ENCODE measurements at regions of chr11 and their contacts with region 1.

Region 1: GRCh38 chr11:71787098-71787823 is 45.7 kb upstream of the DEFB108B start:
- DNase-seq: peak; percentile 97 to 99
- H3K4me3 ChIP-seq: peak overlapping the region; percentile 91
- H3K27ac ChIP-seq: peak overlapping the region; percentile 89
- H3K4me1 ChIP-seq: peaks cover 45% of the 10 kb centered on the region
- H3K27me3 ChIP-seq: no peaks in the 10 kb centered on the region
- CTCF ChIP-seq: no peak

Region 2: DNA sequence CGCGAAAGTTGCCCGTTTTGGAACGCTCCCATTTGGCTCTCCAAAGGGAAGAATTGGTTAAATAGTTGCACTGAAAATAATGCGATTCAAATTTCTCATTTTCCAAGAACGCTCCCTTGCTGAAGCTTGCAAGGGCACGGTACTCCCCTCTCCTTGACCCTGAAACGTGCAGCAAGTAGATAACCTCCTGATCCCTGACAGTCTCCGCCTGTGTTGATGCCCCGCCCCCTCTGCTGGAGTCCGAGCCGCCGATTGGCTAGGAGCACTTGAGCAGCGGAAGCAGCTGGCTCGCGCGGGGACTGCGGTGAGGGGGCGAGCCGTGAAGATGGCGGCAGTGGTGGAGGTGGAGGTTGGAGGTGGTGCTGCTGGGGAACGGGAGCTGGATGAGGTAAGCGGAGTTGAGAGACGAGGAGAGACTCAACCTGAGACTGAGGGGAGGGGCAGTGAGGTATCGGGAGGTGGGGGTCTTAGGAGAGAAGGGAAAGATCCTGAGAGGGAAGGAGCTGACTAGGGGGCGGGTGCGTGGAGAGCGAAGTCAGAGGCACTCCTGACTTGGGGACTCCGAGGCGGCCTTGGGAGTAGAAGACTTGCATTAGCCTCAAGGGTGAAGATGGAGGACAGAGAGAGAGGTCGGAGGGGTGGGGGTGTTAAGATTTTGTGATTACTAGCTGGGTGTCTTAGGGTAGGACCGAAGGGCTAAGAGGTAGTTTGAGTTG is 141.6 kb after region 1 on chr11 and contains the start of gene RNF121:
- CTCF ChIA-PET with region 1: no interaction called
- POLR2A ChIA-PET with region 1: interaction called, 5 read pairs
- intact Hi-C with region 1: loop called (anchors 5 kb)
- DNase-seq: peak; percentile 93 to 95
- H3K4me3 ChIP-seq: peak within 1 kb of the TSS; percentile 89
- H3K27ac ChIP-seq: peak within 1 kb of the TSS; percentile 79
- H3K4me1 ChIP-seq: peaks cover 18% of the 10 kb centered on the region
- H3K27me3 ChIP-seq: no peaks in the 10 kb centered on the region
- CTCF ChIP-seq: no peak
- total RNA-seq, gene RNF121: 40.5 and 41.2 TPM in 2 replicates

Region 3: GRCh38 chr11:72012897-72013721 is 225.8 kb after region 1 on chr11:
- CTCF ChIA-PET with region 1: no interaction called
- POLR2A ChIA-PET with region 1: interaction called, 24 read pairs
- intact Hi-C with region 1: no loop called
- DNase-seq: no peak
- H3K4me3 ChIP-seq: no peak overlapping the region
- H3K27ac ChIP-seq: no peak overlapping the region
- H3K4me1 ChIP-seq: no peaks in the 10 kb centered on the region
- H3K27me3 ChIP-seq: no peaks in the 10 kb centered on the region
- CTCF ChIP-seq: no peak

Region 4: DNA sequence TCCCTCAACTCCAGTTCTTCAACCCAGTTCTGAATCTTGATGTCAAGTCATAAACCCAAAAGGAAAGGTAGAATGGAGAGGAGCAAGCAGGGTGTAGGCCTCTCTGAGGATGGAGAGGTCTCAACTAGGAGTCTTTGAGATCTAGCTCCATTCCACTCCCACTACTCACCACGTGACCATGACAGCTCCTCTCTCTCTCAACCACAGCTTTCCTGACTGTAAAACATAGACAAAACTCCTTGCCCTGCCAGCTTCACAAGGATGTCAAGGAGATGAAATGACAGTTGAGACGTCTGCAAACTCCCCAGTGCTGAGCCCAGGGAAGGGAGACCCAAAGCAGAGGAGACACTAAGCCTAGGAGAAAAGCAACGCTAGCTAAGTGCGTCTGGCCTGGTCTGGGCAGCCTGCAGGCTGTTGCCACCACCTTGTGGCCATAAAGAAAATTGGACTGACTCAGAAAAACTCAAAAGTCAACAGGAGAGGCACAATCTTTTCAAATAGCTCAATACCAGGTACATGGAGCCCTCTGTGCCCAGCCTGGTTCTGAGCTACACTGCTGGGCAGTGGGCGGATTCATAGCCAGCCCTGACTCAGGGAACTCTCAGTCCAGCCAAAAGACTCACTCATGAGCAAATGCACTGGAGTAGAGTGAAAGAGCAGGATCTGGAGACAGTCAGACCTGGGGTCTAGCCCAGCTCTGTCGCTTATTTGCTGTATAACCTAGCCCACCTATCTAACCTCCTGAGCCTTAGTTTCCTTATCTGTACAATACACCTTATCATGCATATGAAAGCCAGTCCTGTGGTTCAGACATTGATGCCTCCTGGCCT is 643.7 kb after region 1 on chr11:
- CTCF ChIA-PET with region 1: no interaction called
- POLR2A ChIA-PET with region 1: no interaction called
- intact Hi-C with region 1: loop called (anchors 5 kb)
- DNase-seq: peak in 1 of 2 experiments; percentile 37
- H3K4me3 ChIP-seq: no peak overlapping the region
- H3K27ac ChIP-seq: no peak overlapping the region
- H3K4me1 ChIP-seq: peaks cover 10% of the 10 kb centered on the region
- H3K27me3 ChIP-seq: no peaks in the 10 kb centered on the region
- CTCF ChIP-seq: peak; percentile 82

Region 5: GRCh38 chr11:72446902-72447769 is 659.9 kb after region 1 on chr11:
- CTCF ChIA-PET with region 1: no interaction called
- POLR2A ChIA-PET with region 1: no interaction called
- intact Hi-C with region 1: loop called (anchors 5 kb)
- DNase-seq: peak in 1 of 2 experiments; percentile 74
- H3K4me3 ChIP-seq: no peak overlapping the region
- H3K27ac ChIP-seq: no peak overlapping the region
- H3K4me1 ChIP-seq: no peaks in the 10 kb centered on the region
- H3K27me3 ChIP-seq: no peaks in the 10 kb centered on the region; the same call in 1 of the 2 replicates
- CTCF ChIP-seq: peak; percentile 89

Region 6: DNA sequence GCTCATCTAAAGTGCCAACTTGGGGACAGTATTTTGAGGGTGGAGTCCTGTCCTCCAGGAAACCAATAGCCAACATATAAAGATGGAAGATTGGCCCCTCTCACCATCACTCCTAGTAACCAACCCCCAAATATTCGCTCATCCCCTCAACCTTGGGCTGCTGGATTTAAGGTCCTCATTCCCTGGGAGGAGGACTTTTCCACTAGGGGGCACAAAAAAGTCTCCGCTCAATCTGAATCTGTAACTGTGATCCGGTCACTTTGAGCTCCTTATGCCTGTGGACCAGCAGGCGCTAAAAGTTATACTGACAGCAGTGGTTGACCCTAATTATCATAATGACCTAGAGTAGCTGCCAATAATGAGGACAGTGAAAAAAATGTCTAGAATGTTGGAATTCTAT is 667.5 kb after region 1 on chr11:
- CTCF ChIA-PET with region 1: no interaction called
- POLR2A ChIA-PET with region 1: interaction called, 12 read pairs
- intact Hi-C with region 1: loop called (anchors 5 kb)
- DNase-seq: no peak
- H3K4me3 ChIP-seq: no peak overlapping the region
- H3K27ac ChIP-seq: no peak overlapping the region
- H3K4me1 ChIP-seq: no peaks in the 10 kb centered on the region
- H3K27me3 ChIP-seq: peaks cover 24% of the 10 kb centered on the region; the same call in 1 of the 2 replicates
- CTCF ChIP-seq: no peak